PC-3 (cell line): ENCODE measurements at regions of chr9 and their contacts with region 1.

Region 1: DNA sequence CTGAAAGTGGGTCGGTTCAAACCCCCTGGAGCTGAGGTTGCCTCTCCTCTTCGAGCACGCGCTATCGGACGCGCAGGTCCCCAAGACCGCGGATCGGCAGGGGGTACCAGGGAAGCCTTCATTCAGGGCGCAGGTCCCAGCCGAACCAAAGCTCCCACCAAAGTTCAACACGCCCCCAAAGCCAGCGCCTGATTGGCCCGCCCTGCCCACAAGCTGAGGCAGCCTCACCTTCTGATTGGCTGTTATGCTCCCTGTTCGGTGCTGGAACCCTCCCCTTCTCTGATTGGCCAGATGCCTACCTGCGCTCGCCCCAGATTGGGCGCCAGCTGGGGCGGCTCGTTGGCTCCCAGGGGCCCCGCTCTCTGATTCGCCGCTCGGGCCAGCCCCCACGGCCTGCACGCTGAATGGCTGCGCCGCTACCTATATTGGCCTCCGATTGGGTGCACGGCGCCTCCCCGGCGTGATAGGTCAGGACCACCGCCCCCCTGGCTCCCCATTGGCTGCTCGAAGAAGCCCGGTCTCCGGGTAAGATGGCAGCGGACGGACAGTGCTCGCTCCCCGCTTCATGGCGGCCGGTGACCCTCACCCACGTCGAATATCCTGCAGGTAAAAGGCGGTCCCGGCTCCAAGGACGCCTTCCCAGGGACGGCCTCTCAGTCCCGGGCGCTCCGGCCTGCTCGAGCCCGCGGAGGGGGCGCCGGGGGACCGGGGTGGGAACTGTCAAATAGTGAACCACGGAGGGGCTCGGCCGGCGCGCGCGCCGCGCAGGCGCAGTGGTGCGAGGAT is at the start of gene DOLPP1:
- DNase-seq: peak; percentile 97
- ATAC-seq: peak; percentile 94
- H3K4me3 ChIP-seq: peak within 1 kb of the TSS; percentile 88
- H3K27ac ChIP-seq: peak within 1 kb of the TSS; percentile 36
- H3K4me1 ChIP-seq: peaks cover 6% of the 10 kb centered on the region; the same call in 1 of the 2 replicates
- H3K27me3 ChIP-seq: no peaks in the 10 kb centered on the region
- CTCF ChIP-seq: no peak
- total RNA-seq, gene DOLPP1: 27.3 and 37.1 TPM in 2 replicates

Region 2: GRCh38 chr9:129110740-129111527 is 30.1 kb after region 1 on chr9 and contains the starts of genes CRAT and PTPA:
- CTCF ChIA-PET with region 1: no interaction called
- POLR2A ChIA-PET with region 1: no interaction called
- intact Hi-C with region 1: loop called (anchors 2 kb)
- DNase-seq: peak; percentile 85
- ATAC-seq: peak; percentile 81
- H3K4me3 ChIP-seq: peak within 1 kb of the TSS; percentile 78
- H3K27ac ChIP-seq: peak within 1 kb of the TSS; percentile 71
- H3K4me1 ChIP-seq: peaks cover 12% of the 10 kb centered on the region
- H3K27me3 ChIP-seq: no peaks in the 10 kb centered on the region
- CTCF ChIP-seq: no peak
- total RNA-seq, gene CRAT: 12.8 and 16.1 TPM in 2 replicates
- total RNA-seq, gene PTPA: 138 and 154 TPM in 2 replicates